HEK293 (cell line): ENCODE measurements at regions of chr9 and their contacts with region 1.

Region 1: DNA sequence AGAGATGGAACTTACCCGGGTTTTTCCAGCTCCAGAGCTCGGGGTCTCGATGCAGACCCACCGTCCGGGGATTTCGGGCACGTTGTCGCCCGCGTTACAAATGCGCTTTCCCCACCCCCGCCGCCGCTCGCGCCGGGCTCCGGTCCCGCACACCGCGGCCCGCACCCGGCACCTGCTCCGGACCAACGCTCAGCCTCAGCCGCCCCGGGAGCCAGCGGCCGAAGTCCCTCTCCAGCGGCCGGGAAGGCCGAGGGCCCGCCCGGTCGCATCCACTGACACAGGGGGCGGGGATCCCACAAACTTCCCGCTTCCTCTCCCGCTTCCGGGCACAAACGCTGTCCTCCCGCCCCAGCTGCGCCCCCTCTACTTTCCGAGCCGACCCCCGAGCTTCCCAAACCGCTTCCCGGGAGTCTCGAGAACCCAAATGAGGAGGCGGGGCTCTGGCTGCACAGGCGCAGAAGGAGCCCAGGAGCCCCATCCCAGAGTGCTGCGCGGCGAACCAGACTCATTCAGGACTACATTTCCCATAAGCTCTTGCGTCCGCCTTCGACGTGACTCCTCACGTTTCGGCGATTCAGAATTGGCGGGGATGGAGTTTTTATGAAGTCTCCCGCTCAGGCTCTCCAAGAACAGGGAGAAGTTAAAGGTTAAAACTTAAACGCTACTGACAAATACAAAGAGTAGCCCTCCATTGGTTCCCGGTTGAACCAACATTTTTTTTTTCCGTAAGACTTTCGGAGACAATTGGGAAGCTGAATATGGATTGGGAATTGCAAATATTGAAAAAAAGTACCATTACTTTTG is at the start of gene ZNF782:
- H3K4me3 ChIP-seq: peak within 1 kb of the TSS; percentile 84
- H3K27ac ChIP-seq: peak within 1 kb of the TSS; percentile 53; the same call in 1 of the 2 replicates
- H3K4me1 ChIP-seq: no peaks in the 10 kb centered on the region
- CTCF ChIP-seq: 0 out of 2 replicates have a peak, but pooled peaks have one; percentile 16

Region 2: GRCh38 chr9:96514108-96514799 is 340.0 kb before region 1 on chr9:
- CTCF ChIA-PET with region 1: no interaction called
- POLR2A ChIA-PET with region 1: no interaction called
- H3K4me3 ChIP-seq: no peak overlapping the region
- H3K27ac ChIP-seq: no peak overlapping the region
- H3K4me1 ChIP-seq: no peaks in the 10 kb centered on the region
- CTCF ChIP-seq: no peak

Region 3: DNA sequence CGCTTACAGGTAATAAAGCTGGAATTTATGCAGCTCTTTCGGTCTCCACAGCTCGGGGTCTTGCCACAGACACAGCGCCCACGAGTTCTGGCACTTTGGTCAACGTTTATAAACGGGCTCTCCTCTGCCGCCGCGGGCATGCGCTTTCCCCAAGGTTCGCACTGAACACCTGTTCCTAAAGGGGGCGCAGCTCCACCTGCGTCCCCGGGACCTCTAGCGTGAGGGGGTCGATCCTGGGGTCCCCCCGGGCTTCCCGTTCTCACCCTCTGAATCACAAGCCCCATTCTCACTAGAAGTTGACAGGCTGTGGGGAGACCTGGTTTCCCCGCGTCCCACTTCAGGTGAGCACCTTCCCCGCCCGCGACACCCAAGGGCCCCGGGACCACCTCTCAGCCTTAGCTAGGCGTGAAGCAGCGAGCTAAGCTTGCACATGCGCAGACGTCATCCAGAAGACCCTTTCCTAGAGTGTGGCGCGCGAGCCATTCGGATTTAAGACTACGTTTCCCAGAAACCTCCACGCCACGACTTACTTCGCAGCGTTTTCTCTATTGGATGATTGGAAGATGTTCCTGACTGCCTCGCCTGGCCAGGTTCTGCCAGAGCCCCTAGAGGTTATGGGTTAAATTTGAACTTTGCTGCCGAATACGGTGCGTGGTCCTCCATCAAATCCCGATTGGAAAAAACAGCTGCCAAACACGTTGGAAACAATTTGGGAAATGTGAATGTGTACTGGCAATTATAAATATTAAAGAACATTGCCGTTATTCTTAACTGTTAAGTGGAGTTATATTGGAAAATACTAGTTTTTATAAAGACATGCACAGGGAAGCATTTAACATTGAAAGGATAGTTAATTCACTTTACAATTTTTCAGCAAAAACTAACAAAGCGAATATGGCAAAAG is 21.4 kb after region 1 on chr9:
- CTCF ChIA-PET with region 1: interaction called, 67 read pairs
- POLR2A ChIA-PET with region 1: interaction called, 15 read pairs
- H3K4me3 ChIP-seq: peak overlapping the region; percentile 62
- H3K27ac ChIP-seq: no peak overlapping the region; the same call in 1 of the 2 replicates
- H3K4me1 ChIP-seq: no peaks in the 10 kb centered on the region
- CTCF ChIP-seq: peak; percentile 69

Region 4: DNA sequence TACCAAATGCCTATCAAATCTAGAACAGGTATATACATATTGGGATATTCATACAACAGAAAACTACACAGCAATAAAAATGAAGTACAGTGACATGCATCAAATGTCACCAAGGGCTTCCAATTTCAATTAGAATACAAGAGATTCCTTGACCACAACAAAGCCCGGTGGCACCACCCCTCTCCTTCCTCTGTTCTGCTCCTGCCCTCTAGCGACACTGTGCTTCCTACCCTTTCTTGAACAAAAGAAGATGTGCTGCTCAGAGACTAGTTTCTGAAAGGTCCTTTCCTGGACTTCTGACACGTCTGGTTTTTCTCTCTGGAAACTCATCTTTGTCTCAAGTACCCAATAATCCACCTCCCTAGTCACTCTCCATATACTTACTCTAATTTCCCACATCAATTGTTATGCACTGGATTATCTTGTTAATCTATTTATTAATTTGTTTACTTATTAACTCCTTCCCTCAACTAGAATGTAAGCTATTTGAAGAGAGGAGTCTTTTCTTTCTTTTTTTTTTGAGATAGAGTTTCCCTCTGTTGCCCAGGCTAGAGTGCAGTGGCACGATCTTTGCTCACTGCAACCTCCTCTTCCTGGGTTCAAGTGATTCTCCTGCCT is 255.0 kb after region 1 on chr9:
- CTCF ChIA-PET with region 1: interaction called, 15 read pairs
- POLR2A ChIA-PET with region 1: no interaction called
- H3K4me3 ChIP-seq: no peak overlapping the region
- H3K27ac ChIP-seq: no peak overlapping the region
- H3K4me1 ChIP-seq: no peaks in the 10 kb centered on the region
- CTCF ChIP-seq: no peak

Region 5: GRCh38 chr9:97398999-97399758 is 544.9 kb after region 1 on chr9:
- CTCF ChIA-PET with region 1: interaction called, 42 read pairs
- POLR2A ChIA-PET with region 1: interaction called, 3 read pairs
- H3K4me3 ChIP-seq: no peak overlapping the region
- H3K27ac ChIP-seq: no peak overlapping the region
- H3K4me1 ChIP-seq: no peaks in the 10 kb centered on the region
- CTCF ChIP-seq: peak; percentile 49